MCF 10A (cell line): ENCODE measurements at regions of chr7 and their contacts with region 1.

Region 1: GRCh38 chr7:27172823-27173510 is 1.2 kb downstream of the HOXA10 start:
- DNase-seq: peak; percentile 55
- H3K4me3 Mint-ChIP-seq: peak overlapping the region; percentile 79
- H3K27ac Mint-ChIP-seq: peak overlapping the region; percentile 87
- H3K4me1 Mint-ChIP-seq: peaks cover 20% of the 10 kb centered on the region
- H3K27me3 Mint-ChIP-seq: no peaks in the 10 kb centered on the region
- CTCF ChIP-seq: no peak

Region 2: GRCh38 chr7:27080844-27081436 is 92.0 kb before region 1 on chr7:
- CTCF ChIA-PET with region 1: no interaction called
- POLR2A ChIA-PET with region 1: no interaction called
- intact Hi-C with region 1: no loop called
- DNase-seq: peak; percentile 73
- H3K4me3 Mint-ChIP-seq: peak overlapping the region; percentile 11
- H3K27ac Mint-ChIP-seq: peak overlapping the region; percentile 92
- H3K4me1 Mint-ChIP-seq: peaks cover 40% of the 10 kb centered on the region
- H3K27me3 Mint-ChIP-seq: no peaks in the 10 kb centered on the region
- CTCF ChIP-seq: no peak

Region 3: DNA sequence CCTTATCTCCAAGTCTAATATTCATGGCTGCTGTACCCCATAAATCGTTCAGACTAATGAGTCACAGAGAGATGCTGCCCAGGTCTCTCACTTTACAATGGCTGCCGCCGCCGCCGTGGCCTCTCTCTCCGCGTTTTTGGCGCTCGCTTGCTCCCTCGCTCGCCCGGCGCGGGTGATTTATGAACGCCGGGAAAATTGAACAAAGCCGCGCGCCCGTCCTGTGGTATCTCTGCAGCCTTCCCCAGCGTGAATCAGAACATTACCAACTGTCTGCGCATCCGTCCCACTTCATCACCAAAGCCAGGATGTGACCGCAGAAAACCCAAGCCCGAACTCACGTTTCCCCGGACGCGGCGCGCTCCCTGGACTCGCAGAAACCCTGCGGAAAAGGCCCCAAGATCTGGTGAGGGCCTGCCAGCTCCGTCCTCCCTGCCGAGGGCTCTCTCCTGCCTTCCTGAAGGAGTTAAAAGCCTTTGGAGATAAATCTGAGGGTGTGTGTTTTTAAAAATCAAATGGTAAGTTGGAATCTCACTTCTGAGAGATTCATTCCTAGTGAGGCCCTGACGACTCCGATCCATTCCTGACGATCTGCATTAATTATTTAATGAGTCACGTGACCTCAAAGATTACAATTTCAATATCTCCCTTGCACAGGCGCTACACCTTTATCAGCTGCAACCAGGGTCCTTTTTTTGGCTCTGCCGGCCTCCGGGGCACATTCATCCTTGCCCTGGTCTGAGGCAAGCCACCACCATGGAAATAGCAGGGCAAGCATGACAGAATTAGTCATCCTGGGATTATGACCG is 48.7 kb before region 1 on chr7:
- CTCF ChIA-PET with region 1: no interaction called
- POLR2A ChIA-PET with region 1: interaction called, 15 read pairs
- intact Hi-C with region 1: no loop called
- DNase-seq: no peak
- H3K4me3 Mint-ChIP-seq: peak overlapping the region; percentile 29
- H3K27ac Mint-ChIP-seq: no peak overlapping the region
- H3K4me1 Mint-ChIP-seq: peaks cover 20% of the 10 kb centered on the region
- H3K27me3 Mint-ChIP-seq: no peaks in the 10 kb centered on the region
- CTCF ChIP-seq: no peak

Region 4: DNA sequence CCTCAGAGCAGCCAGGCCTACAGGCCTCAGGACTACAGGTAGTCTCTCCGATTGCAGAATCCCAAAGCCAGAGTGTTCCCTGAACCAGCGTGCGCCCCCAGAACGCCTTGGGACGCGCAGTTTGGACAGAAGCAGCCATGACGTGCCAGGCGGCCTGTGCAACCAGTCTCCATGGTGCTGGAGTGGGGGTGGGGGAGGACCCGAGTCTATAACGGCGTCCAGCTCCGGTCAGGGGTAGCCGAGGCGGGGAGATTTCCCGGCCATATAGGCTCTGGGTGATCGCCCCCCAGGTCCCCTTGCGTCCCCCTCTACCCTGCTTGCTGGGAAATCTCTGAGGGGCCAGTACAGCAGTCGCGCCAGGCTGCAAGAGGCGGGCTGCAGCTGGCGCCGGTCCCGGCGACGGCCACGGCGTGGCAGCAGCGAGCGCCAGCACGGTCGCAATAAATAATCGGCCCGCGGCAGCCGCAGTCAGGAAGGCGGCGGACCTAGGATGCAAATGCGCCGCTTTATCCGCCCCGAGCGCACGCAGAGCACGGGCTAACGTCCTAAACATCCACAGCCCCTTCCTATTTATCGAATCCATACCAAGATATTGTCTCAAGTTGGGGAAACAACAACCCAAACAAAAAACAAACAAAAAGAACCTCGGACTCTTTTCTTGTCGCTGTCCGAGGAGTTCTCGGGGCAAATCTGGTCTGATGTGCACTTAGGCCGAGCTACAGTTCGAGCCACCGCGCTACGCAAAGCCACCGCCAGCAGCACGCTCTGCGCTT is 22.2 kb before region 1 on chr7:
- CTCF ChIA-PET with region 1: interaction called, 10 read pairs
- POLR2A ChIA-PET with region 1: interaction called, 36 read pairs
- intact Hi-C with region 1: no loop called
- DNase-seq: peak; percentile 72
- H3K4me3 Mint-ChIP-seq: peak overlapping the region; percentile 79
- H3K27ac Mint-ChIP-seq: no peak overlapping the region
- H3K4me1 Mint-ChIP-seq: peaks cover 15% of the 10 kb centered on the region
- H3K27me3 Mint-ChIP-seq: no peaks in the 10 kb centered on the region
- CTCF ChIP-seq: peak; percentile 89

Region 5: GRCh38 chr7:27160546-27161213 is 12.3 kb before region 1 on chr7:
- CTCF ChIA-PET with region 1: interaction called, 14 read pairs
- POLR2A ChIA-PET with region 1: interaction called, 49 read pairs
- intact Hi-C with region 1: no loop called
- DNase-seq: peak; percentile 83
- H3K4me3 Mint-ChIP-seq: peak overlapping the region; percentile 84
- H3K27ac Mint-ChIP-seq: no peak overlapping the region
- H3K4me1 Mint-ChIP-seq: peaks cover 8% of the 10 kb centered on the region
- H3K27me3 Mint-ChIP-seq: no peaks in the 10 kb centered on the region
- CTCF ChIP-seq: peak; percentile 96